Ovary (tissue), 10 donors: ENCODE measurements at regions of chr7 and their contacts with region 1.

Region 1: DNA sequence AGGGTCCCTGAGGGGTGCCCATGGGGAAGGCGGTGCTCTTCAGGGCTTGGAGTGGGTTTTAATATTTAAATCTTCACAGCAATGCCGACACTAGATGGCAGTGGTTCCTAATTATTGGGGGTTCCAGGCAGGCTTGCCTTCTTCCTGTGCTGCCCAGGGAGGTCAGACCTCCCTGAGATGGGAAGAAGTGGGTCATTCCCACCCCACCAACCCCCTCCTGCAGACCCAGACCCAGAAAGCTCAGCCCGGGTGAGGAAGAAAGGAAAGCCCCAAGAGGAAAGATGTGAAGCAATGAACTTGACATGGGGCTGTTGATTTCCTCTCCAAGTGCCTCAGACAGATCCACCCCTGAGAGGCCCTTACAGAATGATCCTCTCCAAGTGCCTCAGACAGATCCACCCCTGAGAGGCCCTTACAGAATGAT is 85.1 kb upstream of the LANCL2 start:
- DNase-seq: peak; percentile 47 to 66 (median 59)
- H3K4me3 ChIP-seq: no peak overlapping the region
- H3K27ac ChIP-seq: no peak overlapping the region
- H3K4me1 ChIP-seq: no peaks in the 10 kb centered on the region
- H3K27me3 ChIP-seq: no peaks in the 10 kb centered on the region
- CTCF ChIP-seq: peak; percentile 41 to 45 (median 44)
- EP300 ChIP-seq: no peak
- POLR2A ChIP-seq: no peak

Region 2: GRCh38 chr7:55360486-55360885 is 80.4 kb after region 1 on chr7:
- intact Hi-C with region 1: loop called in 1 of 4 experiments (anchors 5 kb)
- DNase-seq: no peak
- H3K4me3 ChIP-seq: no peak overlapping the region
- H3K27ac ChIP-seq: no peak overlapping the region
- H3K4me1 ChIP-seq: no peaks in the 10 kb centered on the region
- H3K27me3 ChIP-seq: no peaks in the 10 kb centered on the region
- CTCF ChIP-seq: no peak
- EP300 ChIP-seq: no peak
- POLR2A ChIP-seq: no peak

Region 3: DNA sequence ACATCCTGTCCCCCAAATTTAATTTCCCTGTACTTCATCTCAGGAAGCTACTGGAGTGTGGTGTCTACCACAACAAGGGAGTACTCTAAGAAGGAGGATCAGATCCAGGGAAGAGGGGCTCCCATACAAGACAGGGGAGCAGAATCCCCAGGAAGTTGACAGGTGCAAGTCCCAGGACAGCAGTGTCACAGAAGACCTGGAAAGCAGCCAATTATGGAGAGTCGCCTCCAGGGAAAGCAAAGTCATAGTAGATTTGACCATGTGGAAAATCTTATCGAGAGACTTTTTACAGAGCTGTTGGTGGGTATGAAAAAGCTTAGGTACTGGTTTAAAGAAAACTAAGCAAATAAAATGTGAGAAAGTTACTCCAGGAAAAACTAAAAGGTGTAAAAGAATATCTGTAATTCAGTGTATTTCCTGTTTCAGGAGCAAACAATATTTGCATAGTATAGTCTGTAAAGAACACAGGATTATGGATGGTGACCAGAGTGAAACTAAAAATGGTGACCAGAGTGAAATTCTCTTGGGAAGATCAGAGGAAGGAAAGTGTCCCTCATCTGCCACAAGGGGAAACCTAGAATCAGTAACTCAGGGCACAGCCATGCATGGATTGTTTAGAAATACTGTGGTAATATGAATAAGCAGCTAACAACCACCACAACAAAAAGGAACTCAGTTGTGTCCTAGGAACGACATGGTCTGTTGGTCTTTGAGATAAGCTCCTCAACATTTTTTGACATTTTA is 129.6 kb after region 1 on chr7:
- intact Hi-C with region 1: loop called in 3 of 4 experiments (anchors 2 to 5 kb)
- DNase-seq: no peak
- H3K4me3 ChIP-seq: no peak overlapping the region
- H3K27ac ChIP-seq: no peak overlapping the region
- H3K4me1 ChIP-seq: no peaks in the 10 kb centered on the region
- H3K27me3 ChIP-seq: no peaks in the 10 kb centered on the region
- CTCF ChIP-seq: no peak
- EP300 ChIP-seq: no peak
- POLR2A ChIP-seq: no peak

Region 4: DNA sequence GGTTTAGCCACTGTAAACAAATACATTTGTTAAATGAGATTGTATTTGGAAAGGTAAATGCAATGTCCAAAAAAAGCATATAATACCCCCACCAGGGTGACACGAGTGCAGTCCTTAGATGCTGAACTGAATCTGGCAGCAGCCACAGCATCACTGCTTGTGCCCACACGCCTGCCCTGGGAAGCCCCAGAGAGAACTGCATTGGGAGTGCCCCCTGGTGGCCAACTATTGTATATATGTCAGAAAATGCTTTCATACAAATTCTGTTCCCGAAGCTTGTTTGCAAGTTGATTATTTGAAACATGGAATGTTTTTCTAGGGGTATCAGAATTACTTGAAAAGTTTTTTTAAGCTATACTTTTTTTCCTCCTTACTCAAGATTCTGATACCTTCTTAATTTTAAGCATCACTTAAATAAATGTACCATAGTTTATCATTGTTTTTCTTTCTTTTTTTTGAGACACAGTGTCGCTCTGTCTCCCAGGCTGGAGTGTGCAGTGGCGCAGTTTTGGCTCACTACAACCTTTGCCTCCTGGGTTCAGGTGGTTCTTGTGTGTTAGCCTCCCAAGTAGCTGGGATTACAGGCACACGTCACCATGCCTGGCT is 135.2 kb after region 1 on chr7:
- intact Hi-C with region 1: loop called (anchors 2 to 5 kb)
- DNase-seq: peak; percentile 74 to 83 (median 78)
- H3K4me3 ChIP-seq: no peak overlapping the region
- H3K27ac ChIP-seq: no peak overlapping the region
- H3K4me1 ChIP-seq: no peaks in the 10 kb centered on the region
- H3K27me3 ChIP-seq: no peaks in the 10 kb centered on the region
- CTCF ChIP-seq: peak; percentile 63 to 88 (median 65)
- EP300 ChIP-seq: no peak
- POLR2A ChIP-seq: no peak

Region 5: GRCh38 chr7:55594870-55595269 is 314.8 kb after region 1 on chr7:
- intact Hi-C with region 1: loop called in 1 of 4 experiments (anchors 5 kb)
- DNase-seq: no peak
- H3K4me3 ChIP-seq: no peak overlapping the region
- H3K27ac ChIP-seq: no peak overlapping the region
- H3K4me1 ChIP-seq: peaks cover 1% of the 10 kb centered on the region
- H3K27me3 ChIP-seq: no peaks in the 10 kb centered on the region
- CTCF ChIP-seq: no peak
- EP300 ChIP-seq: no peak
- POLR2A ChIP-seq: no peak